Panc1 (cell line): ENCODE measurements at regions of chr4 and their contacts with region 1.

Region 1: DNA sequence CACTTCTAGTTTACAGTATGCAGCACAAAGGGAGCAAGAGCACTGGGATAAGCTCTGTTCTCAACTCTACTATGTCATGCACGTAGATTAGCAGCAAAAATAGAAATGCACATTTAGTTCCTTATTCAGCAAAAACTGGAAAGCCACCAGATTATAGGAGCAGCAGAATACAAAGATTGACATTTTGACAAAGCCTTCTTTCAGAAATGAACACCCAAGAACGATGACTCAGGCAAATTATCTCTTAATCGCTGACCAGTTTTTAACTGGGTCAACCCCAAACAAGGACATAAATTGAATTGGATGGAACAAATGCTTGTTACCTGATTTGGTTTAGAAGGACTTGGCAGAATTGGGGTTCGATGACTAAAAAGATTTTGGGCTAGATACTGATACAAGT is 775.3 kb upstream of the HS3ST1 start:
- DNase-seq: no peak
- ATAC-seq: no peak
- H3K4me3 ChIP-seq: no peak overlapping the region
- H3K27ac ChIP-seq: no peak overlapping the region
- H3K4me1 ChIP-seq: no peaks in the 10 kb centered on the region
- H3K27me3 ChIP-seq: no peaks in the 10 kb centered on the region
- CTCF ChIP-seq: no peak

Region 2: GRCh38 chr4:11597506-11597905 is 606.4 kb before region 1 on chr4:
- CTCF ChIA-PET with region 1: no interaction called
- POLR2A ChIA-PET with region 1: no interaction called
- in situ Hi-C with region 1: no loop called
- intact Hi-C with region 1: no loop called
- DNase-seq: no peak
- ATAC-seq: no peak
- H3K4me3 ChIP-seq: no peak overlapping the region
- H3K27ac ChIP-seq: no peak overlapping the region
- H3K4me1 ChIP-seq: no peaks in the 10 kb centered on the region
- H3K27me3 ChIP-seq: no peaks in the 10 kb centered on the region
- CTCF ChIP-seq: no peak

Region 3: GRCh38 chr4:12186526-12186925 is 17.4 kb before region 1 on chr4:
- CTCF ChIA-PET with region 1: no interaction called
- POLR2A ChIA-PET with region 1: no interaction called
- in situ Hi-C with region 1: no loop called
- intact Hi-C with region 1: loop called (anchors 2 kb)
- DNase-seq: no peak
- ATAC-seq: no peak
- H3K4me3 ChIP-seq: no peak overlapping the region
- H3K27ac ChIP-seq: no peak overlapping the region
- H3K4me1 ChIP-seq: no peaks in the 10 kb centered on the region
- H3K27me3 ChIP-seq: no peaks in the 10 kb centered on the region
- CTCF ChIP-seq: no peak